ENCODE measurements at regions of chr11 and their contacts with region 1.

Region 1: GRCh38 chr11:124758317-124759203 is 3.5 kb downstream of the ESAM start:
- DNase-seq: peak; percentile 70 to 90
- H3K4me3 ChIP-seq: peak overlapping the region; percentile 18 to 58 (median 34); a peak in 7 of 8 replicates
- H3K27ac ChIP-seq: no peak overlapping the region
- H3K4me1 ChIP-seq: peaks cover 6 to 43% (median 27%) of the 10 kb centered on the region in 4 experiments
- H3K27me3 ChIP-seq: peaks cover 76 to 98% (median 91%) of the 10 kb centered on the region in 4 experiments
- CTCF ChIP-seq: peak; percentile 74 to 88 (median 86)
- EP300 ChIP-seq: no peak
- POLR2A ChIP-seq: no peak
- RAD21 ChIP-seq: peak; percentile 51 to 65

Region 2: DNA sequence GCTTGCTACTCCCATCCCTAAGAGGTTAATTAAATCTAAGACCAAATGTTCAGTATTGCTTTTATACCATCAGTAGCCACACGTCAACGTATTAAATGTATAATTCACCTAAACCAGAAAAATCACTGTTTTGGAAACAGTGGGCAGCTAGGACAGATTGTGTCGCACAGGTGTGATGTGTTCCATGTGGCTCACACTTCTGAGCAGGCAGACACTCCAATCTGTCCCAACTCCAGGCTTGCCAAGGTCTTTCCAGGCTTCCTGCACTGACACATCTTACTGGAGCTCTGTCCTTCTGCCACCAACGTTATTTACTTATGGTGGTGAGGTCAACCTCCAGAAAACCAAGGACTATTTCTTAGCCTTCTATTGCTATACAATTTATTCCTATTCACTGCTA is 96.5 kb before region 1 on chr11:
- CTCF ChIA-PET with region 1: interaction called, 42 read pairs
- POLR2A ChIA-PET with region 1: no interaction called
- DNase-seq: no peak
- H3K4me3 ChIP-seq: no peak overlapping the region
- H3K27ac ChIP-seq: no peak overlapping the region
- H3K4me1 ChIP-seq: peaks cover 0 to 7% (median 4%) of the 10 kb centered on the region in 4 experiments; a peak in 4 of 7 replicates
- H3K27me3 ChIP-seq: no peaks in the 10 kb centered on the region; a peak in 2 of 7 replicates
- CTCF ChIP-seq: no peak
- EP300 ChIP-seq: no peak
- POLR2A ChIP-seq: no peak
- RAD21 ChIP-seq: no peak

Region 3: DNA sequence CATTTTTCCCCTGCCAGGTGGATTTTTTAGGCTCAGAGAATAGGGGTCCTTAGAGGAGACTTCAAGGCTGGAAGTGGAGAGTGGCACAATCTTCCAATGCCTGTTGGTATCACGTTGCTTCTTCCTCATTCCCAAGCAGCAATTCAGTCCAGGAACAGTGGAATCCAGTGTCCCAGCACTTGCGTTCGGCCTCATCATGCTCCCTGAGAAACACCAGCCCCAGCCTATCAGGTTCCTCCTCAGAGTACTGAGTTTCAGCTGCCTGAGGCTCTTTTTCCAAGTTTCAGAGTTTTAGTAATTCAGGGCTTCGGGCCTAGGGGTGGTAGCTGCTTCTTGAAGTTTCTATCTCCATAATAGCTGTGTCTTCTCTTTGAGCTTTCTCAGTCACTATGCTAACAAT is 50.7 kb before region 1 on chr11:
- CTCF ChIA-PET with region 1: no interaction called
- POLR2A ChIA-PET with region 1: no interaction called
- DNase-seq: no peak
- H3K4me3 ChIP-seq: no peak overlapping the region
- H3K27ac ChIP-seq: no peak overlapping the region
- H3K4me1 ChIP-seq: no peaks in the 10 kb centered on the region
- H3K27me3 ChIP-seq: no peaks in the 10 kb centered on the region
- CTCF ChIP-seq: no peak
- EP300 ChIP-seq: no peak
- POLR2A ChIP-seq: no peak
- RAD21 ChIP-seq: no peak

Region 4: DNA sequence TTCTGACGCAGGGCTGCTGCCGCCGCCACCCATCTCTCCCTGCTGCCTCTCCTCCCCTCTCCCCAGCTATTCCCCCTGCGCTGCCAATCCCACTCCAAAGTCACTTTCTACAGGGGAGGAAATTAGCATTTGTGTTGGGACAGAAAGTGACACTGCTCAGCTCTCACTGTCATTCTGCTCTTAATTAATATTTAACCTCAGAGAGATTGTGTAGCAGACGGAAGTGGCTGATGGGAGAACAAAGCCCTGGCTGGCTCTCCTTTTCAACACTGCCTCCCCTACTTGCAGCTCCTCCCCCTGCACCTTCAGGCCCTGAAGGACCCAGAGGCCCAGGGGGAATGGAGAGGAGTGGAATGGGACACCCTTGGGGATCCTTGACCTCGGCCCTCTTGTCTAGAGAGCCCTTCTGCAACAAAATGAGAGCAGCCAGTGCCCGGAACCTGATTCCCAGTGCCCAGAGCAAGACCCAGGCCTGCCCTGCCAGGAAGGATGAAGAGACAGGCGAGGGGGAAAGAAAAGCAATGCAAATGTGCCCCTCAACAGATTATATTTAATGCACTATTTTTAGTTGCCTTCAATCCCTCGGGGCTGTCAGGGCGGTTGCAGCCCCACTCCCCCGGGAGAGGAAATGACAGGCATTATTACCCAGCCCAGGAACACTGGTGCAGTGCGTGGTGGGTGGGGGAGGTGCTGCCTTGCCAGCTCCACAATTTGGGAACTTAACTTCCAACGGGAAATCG is 33.4 kb before region 1 on chr11:
- CTCF ChIA-PET with region 1: interaction called, 382 read pairs
- POLR2A ChIA-PET with region 1: no interaction called
- DNase-seq: no peak
- H3K4me3 ChIP-seq: peak overlapping the region in 1 of 4 experiments; percentile 12; a peak in 1 of 8 replicates
- H3K27ac ChIP-seq: no peak overlapping the region
- H3K4me1 ChIP-seq: peaks cover 8 to 15% (median 10%) of the 10 kb centered on the region in 4 experiments
- H3K27me3 ChIP-seq: peaks cover 18 to 46% (median 37%) of the 10 kb centered on the region in 4 experiments
- CTCF ChIP-seq: no peak
- EP300 ChIP-seq: no peak
- POLR2A ChIP-seq: no peak
- RAD21 ChIP-seq: no peak

Region 5: DNA sequence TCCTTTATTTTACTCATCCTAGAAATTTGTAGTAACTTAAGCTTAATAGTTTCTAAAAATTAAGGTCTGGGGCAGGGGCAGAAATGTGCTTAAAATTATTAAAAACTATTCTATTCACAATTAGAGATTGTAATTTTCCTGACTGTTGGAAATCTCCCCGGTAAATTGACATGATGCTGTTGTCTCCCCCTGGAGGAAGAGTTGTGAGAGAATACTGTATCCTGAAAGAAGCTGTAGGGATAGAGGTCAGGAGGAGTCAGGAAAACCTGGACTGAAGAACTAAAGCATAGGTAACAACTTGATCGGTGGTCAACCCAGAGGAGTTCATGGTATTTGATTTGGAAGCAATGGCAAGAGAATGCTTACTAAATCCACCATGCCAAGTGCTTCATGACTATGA is 19.7 kb after region 1 on chr11:
- CTCF ChIA-PET with region 1: interaction called, 34 read pairs
- POLR2A ChIA-PET with region 1: interaction called, 7 read pairs
- DNase-seq: no peak
- H3K4me3 ChIP-seq: no peak overlapping the region
- H3K27ac ChIP-seq: no peak overlapping the region
- H3K4me1 ChIP-seq: no peaks in the 10 kb centered on the region
- H3K27me3 ChIP-seq: no peaks in the 10 kb centered on the region
- CTCF ChIP-seq: peak in 2 of 3 experiments; percentile 44 to 63; a peak in 3 of 4 replicates
- EP300 ChIP-seq: no peak
- POLR2A ChIP-seq: no peak
- RAD21 ChIP-seq: peak; percentile 29 to 33; a peak in 3 of 4 replicates

Region 6: DNA sequence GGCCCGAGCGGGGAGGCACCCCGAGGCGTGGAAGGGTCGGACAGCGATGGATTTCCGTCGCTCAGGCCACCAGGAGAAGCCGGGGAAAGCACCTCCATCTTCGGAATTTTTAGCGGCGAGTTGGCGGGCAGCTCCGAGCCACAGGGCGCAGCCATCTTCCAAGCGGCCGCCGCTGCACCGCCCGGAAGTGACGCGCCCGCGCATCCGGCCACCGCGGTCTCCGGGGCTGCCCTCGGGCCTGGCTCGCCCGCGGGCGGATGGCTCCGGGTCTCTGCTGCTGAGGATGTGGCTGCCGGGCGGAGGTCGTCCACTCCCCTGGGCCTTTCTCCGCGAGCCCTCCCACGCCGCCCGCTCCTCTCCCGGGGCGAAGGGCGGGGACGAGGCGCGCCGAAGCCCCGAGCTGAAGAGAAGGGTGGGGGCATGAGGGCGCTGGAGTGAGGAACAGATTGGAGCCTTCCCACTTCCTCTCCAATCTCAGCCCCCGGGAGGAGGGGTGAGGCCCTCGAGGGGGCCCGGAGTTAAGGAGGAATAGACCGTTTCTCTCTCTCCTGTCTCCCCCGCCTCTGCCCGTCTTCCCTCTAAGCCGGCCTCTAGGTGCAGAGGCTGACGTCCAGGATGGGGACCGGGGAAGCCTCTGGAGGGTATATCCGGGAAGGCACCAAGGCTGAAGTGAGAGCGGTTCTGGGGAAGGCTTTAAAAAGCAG is 41.8 kb after region 1 on chr11 and contains the start of gene MSANTD2:
- CTCF ChIA-PET with region 1: interaction called, 111 read pairs
- POLR2A ChIA-PET with region 1: interaction called, 26 read pairs
- DNase-seq: peak; percentile 29 to 90
- H3K4me3 ChIP-seq: peak within 1 kb of the TSS; percentile 70 to 86 (median 74)
- H3K27ac ChIP-seq: peak within 1 kb of the TSS; percentile 96
- H3K4me1 ChIP-seq: peaks cover 0 to 6% (median under 1%) of the 10 kb centered on the region in 4 experiments; a peak in 3 of 7 replicates
- H3K27me3 ChIP-seq: no peaks in the 10 kb centered on the region
- CTCF ChIP-seq: no peak
- EP300 ChIP-seq: no peak
- POLR2A ChIP-seq: peak; percentile 97 to 98
- RAD21 ChIP-seq: no peak
- total RNA-seq, gene MSANTD2: 15.9 and 17.3 TPM in 2 replicates

Region 7: DNA sequence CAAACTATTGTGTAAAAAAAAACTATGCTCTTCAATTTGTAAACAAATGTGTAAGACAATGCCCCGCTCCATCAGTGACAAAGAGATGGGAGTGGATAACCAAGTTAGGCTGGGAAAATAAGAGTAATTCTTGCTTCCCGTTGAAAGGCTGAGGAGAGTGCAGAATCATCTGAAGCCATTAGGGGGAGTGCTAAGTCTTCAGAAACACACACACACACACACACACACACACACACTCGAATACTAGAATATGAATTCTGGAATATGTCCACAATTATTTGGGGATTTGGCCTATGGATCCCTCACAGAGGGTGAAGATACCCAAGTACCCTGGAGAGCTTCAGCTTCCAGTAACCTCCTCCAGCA is 78.9 kb after region 1 on chr11:
- CTCF ChIA-PET with region 1: interaction called, 31 read pairs
- POLR2A ChIA-PET with region 1: interaction called, 4 read pairs
- DNase-seq: peak in 1 of 2 experiments; percentile 52
- H3K4me3 ChIP-seq: no peak overlapping the region
- H3K27ac ChIP-seq: no peak overlapping the region
- H3K4me1 ChIP-seq: peaks cover 0 to 11% (median 3%) of the 10 kb centered on the region in 4 experiments; a peak in 6 of 7 replicates
- H3K27me3 ChIP-seq: peaks cover 46 to 58% (median 53%) of the 10 kb centered on the region in 4 experiments
- CTCF ChIP-seq: peak in 2 of 3 experiments; percentile 71 to 74; a peak in 3 of 4 replicates
- EP300 ChIP-seq: no peak
- POLR2A ChIP-seq: no peak
- RAD21 ChIP-seq: peak; percentile 58 to 69